H1 (cell line): ENCODE measurements at regions of chr15 and their contacts with region 1.

Region 1: GRCh38 chr15:64024172-64025050 is 21.9 kb downstream of the DAPK2 start:
- DNase-seq: no peak
- H3K4me3 ChIP-seq: no peak overlapping the region
- H3K27ac ChIP-seq: no peak overlapping the region
- H3K4me1 ChIP-seq: peaks cover 3 to 8% (median 3%) of the 10 kb centered on the region in 4 experiments; a peak in 5 of 7 replicates
- H3K27me3 ChIP-seq: no peaks in the 10 kb centered on the region
- CTCF ChIP-seq: peak in 2 of 3 experiments; percentile 25 to 29; a peak in 2 of 4 replicates
- EP300 ChIP-seq: no peak
- POLR2A ChIP-seq: no peak
- RAD21 ChIP-seq: peak in 1 of 2 experiments; percentile 13; a peak in 1 of 4 replicates

Region 2: GRCh38 chr15:63970621-63971426 is 53.6 kb before region 1 on chr15:
- CTCF ChIA-PET with region 1: no interaction called
- POLR2A ChIA-PET with region 1: no interaction called
- DNase-seq: peak in 1 of 2 experiments; percentile 23
- H3K4me3 ChIP-seq: no peak overlapping the region
- H3K27ac ChIP-seq: no peak overlapping the region
- H3K4me1 ChIP-seq: peaks cover 7 to 28% (median 20%) of the 10 kb centered on the region in 4 experiments
- H3K27me3 ChIP-seq: peaks cover 0 to 2% (median 0%) of the 10 kb centered on the region in 4 experiments; a peak in 1 of 7 replicates
- CTCF ChIP-seq: no peak
- EP300 ChIP-seq: no peak
- POLR2A ChIP-seq: no peak
- RAD21 ChIP-seq: no peak

Region 3: DNA sequence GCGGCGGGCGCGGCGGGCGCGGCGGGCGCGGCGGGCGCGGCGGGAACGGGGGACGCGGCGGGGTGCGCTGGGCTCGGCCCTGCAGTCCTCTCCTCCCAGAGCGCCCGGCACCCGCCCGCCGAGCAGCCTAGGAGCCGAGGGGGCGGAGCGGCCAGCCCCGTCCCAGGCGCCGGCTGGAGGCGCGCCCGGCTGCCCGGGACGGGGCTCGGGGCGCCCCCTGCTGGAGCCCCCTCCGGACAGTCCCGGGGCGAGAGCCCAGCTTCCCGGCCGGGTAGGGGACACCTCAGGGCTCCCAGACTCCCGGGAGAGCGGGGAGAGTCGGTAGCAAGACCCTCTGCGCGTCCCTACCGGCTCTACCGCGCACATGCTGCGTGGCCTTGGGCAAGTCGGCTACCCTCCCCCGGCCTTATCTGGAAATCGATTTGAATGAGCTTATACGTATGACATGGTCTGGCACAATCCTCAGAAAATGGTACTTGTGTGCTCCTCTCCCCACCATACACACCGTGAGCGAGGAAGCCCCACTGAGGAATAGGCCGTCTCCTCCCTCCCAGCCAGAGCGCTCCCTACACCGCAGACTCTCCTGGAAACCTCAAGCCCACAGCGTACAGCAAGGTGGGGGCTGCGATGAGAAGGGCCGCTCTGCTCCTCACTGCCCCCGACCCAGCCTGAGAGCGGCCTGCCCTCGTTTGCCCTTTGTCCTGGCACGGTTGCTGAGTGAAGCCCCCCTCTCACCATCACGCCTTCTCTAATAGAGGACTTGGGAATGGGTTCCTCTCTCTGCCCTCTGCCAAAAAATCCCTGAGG is 22.1 kb after region 1 on chr15 and contains the start of gene DAPK2:
- CTCF ChIA-PET with region 1: interaction called, 24 read pairs
- POLR2A ChIA-PET with region 1: interaction called, 4 read pairs
- DNase-seq: peak in 1 of 2 experiments; percentile 86
- H3K4me3 ChIP-seq: peak within 1 kb of the TSS; percentile 41 to 70 (median 48)
- H3K27ac ChIP-seq: no peak within 1 kb of the TSS
- H3K4me1 ChIP-seq: peaks cover 0 to 15% (median 5%) of the 10 kb centered on the region in 4 experiments; a peak in 4 of 7 replicates
- H3K27me3 ChIP-seq: peaks cover 3 to 31% (median 19%) of the 10 kb centered on the region in 4 experiments; a peak in 6 of 7 replicates
- CTCF ChIP-seq: peak; percentile 53 to 78 (median 58)
- EP300 ChIP-seq: no peak
- POLR2A ChIP-seq: no peak
- RAD21 ChIP-seq: peak; percentile 46 to 75
- total RNA-seq, gene DAPK2: 2.2 and 2.9 TPM in 2 replicates